RWPE1 (cell line): ENCODE measurements at regions of chr1 and their contacts with region 1.

Region 1: GRCh38 chr1:170714163-170714562 is 50.2 kb downstream of the PRRX1 start:
- DNase-seq: no peak
- H3K27ac ChIP-seq: no peak overlapping the region
- CTCF ChIP-seq: no peak

Region 2: DNA sequence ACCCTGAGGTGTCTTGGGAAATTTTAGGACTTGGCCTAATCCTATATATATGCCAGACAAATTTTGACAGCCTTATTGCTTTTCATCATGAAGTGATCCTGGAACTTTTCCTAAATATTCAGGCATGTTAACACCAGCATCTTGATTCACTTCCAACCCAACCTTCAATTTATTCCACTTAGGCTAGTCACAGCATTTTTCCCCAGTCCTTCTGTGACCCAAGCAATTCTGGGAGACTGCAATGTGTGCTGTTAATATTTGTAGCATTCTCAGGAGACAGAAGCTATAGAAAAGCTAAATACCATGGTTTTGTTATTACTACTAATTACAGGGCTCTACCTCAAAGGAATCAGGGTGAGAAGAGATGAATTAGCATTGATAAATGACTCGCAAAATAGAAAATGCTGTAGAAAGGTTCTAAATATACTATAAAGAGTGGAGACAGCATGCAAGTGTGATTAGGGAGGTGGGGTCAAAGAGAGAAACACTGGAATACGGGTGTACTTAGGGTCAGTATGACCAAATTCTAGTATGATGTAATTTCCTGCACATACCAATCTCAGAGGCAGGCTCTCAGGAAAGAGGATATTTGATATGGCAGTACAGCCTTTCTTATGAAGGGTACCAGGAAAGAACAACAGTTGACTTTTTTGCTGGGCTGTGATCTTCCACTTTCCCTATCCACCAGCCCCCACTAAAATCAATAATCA is 21.1 kb before region 1 on chr1:
- CTCF ChIA-PET with region 1: interaction called, 10 read pairs
- POLR2A ChIA-PET with region 1: no interaction called
- DNase-seq: peak; percentile 16
- H3K27ac ChIP-seq: no peak overlapping the region
- CTCF ChIP-seq: no peak